Activated naive CD4-positive, alpha-beta T cell treated with anti-CD3 and anti-CD28 coated beads, Interleukin-2, amount 10 ng/mL, durations not matched to agents 7 days and 5 days (primary cell): ENCODE measurements at regions of chr1 and their contacts with region 1.

Region 1: GRCh38 chr1:204398217-204399081 is 13.2 kb downstream of the PPP1R15B start:
- DNase-seq: peak; percentile 68
- H3K4me3 Mint-ChIP-seq: no peak overlapping the region
- H3K27ac Mint-ChIP-seq: peak overlapping the region; percentile 84
- H3K4me1 Mint-ChIP-seq: peaks cover 2% of the 10 kb centered on the region
- H3K27me3 Mint-ChIP-seq: no peaks in the 10 kb centered on the region

Region 2: DNA sequence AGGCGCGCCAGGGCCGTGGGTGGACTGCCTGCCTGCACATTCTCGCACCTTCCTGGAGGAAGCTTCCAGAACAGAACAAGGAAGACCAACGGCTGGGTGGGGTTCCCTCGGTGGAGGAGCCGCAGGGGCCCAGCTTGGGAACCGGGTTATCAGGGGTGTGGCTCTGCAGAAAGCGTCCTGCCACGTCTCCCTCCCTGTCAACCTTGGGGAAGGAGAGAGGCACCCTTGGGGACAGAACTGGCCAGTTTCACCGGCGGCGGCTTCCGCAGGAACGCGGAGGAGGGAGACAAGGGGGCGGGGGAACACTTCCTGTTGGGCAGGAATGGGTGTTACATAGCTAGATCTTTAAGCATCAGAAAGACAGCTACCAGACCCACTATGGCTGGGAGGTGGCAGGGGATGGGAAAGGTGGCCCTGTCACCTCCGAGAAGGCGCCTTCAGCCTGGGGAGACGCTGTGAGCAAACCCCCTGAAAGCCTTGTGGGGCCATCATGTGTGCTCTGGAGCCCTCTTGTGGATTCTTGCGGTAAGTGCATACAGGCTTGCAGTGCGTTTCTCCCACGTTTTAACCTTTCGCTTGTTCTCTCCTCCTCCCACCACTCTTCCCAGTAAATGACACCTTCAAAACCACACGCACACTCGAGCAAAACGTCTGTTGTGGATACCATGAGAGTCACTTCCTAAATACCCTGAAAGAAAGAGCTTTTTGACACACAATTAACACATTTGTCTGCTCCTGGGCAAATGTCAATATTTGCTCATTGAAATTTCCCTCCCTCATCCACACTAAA is 34.9 kb before region 1 on chr1:
- CTCF ChIA-PET with region 1: interaction called, 12 read pairs
- DNase-seq: peak; percentile 82
- H3K4me3 Mint-ChIP-seq: peak overlapping the region; percentile 60
- H3K27ac Mint-ChIP-seq: no peak overlapping the region
- H3K4me1 Mint-ChIP-seq: peaks cover 10% of the 10 kb centered on the region
- H3K27me3 Mint-ChIP-seq: peaks cover 57% of the 10 kb centered on the region

Region 3: GRCh38 chr1:204376919-204377794 is 21.3 kb before region 1 on chr1:
- CTCF ChIA-PET with region 1: interaction called, 13 read pairs
- DNase-seq: no peak
- H3K4me3 Mint-ChIP-seq: peak overlapping the region; percentile 35
- H3K27ac Mint-ChIP-seq: no peak overlapping the region
- H3K4me1 Mint-ChIP-seq: peaks cover 11% of the 10 kb centered on the region
- H3K27me3 Mint-ChIP-seq: peaks cover 10% of the 10 kb centered on the region

Region 4: DNA sequence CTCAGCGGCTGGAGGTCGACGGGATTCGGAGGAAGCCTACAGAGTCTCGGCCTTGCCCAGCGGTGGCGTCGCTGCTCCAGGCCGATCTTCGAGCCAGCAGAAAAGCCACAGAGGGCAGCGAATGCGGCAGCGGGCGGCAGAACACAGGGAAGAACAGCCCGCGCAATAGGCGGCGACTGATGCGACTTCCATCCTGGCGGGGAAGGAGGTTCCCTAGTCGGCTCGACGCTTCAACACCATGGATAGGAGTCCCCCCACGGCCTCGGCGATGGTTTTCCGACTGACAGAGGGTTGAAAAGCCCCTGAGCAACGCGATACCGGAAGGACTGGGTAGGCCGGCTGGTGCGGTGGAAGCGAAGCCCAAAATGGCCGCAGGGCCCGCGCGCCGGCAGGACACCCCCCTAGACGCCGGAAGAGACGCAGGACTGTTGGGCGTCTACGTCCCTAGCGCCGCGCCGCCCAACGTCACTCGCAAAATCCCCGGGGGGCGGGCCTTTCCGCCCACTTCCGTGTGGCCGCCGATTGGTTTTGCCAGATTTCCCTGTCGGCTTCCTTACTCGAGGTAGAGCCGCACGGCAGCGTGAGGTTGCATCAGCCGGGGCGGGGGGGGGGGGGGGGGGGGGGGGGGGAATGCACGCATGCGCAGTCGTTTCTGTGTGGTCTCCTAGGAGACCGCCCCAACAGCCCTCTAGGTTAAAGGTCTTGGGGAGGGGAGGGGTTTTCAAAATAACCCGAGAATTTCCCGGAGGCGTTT is 13.2 kb after region 1 on chr1 and contains the start of gene PPP1R15B:
- CTCF ChIA-PET with region 1: interaction called, 41 read pairs
- DNase-seq: peak; percentile 97
- H3K4me3 Mint-ChIP-seq: peak within 1 kb of the TSS; percentile 98
- H3K27ac Mint-ChIP-seq: peak within 1 kb of the TSS; percentile 99
- H3K4me1 Mint-ChIP-seq: peaks cover 13% of the 10 kb centered on the region
- H3K27me3 Mint-ChIP-seq: no peaks in the 10 kb centered on the region

Region 5: DNA sequence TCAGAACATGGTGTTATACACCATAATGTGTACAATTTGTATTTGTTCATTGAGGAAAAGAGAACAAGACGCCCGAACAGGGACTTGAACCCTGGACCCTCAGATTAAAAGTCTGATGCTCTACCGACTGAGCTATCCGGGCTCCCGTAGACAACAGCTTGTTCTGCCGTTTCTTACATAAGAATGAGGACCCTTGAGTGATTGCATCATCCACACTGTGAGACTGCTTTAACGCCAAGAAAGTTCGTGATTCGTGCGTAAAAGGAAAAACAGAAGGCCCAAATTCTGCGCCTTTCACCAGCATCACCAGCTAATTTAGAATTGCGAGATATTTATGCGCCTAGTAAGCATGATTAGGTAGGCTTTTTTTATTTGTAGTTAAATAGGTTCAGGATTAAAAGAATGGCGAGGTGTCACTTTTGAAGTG is 108.5 kb after region 1 on chr1:
- CTCF ChIA-PET with region 1: interaction called, 13 read pairs
- DNase-seq: peak; percentile 88
- H3K4me3 Mint-ChIP-seq: peak overlapping the region; percentile 87
- H3K27ac Mint-ChIP-seq: peak overlapping the region; percentile 100
- H3K4me1 Mint-ChIP-seq: peaks cover 57% of the 10 kb centered on the region
- H3K27me3 Mint-ChIP-seq: peaks cover 5% of the 10 kb centered on the region

Region 6: GRCh38 chr1:204685236-204686006 is 287.0 kb after region 1 on chr1 and contains the start of gene LRRN2:
- CTCF ChIA-PET with region 1: no interaction called
- DNase-seq: no peak
- H3K4me3 Mint-ChIP-seq: peak within 1 kb of the TSS; percentile 61
- H3K27ac Mint-ChIP-seq: no peak within 1 kb of the TSS
- H3K4me1 Mint-ChIP-seq: peaks cover 12% of the 10 kb centered on the region
- H3K27me3 Mint-ChIP-seq: peaks cover 77% of the 10 kb centered on the region